Activated T-helper 1 cell treated with anti-CD3 and anti-CD28 coated beads, Interleukin-12 subunit alpha, Interleukin-12 subunit beta, Interleukin-2, Interleukin-4 antibody, amounts not matched to agents 30 ng/mL and 10 ng/mL and 1 ng/mL, durations not matched to agents 14 hours and 24 hours and 36 hours (primary cell): ENCODE measurements at regions of chr10 and their contacts with region 1.

Region 1: GRCh38 chr10:97498076-97498840 is at the start of gene MMS19:
- DNase-seq: peak; percentile 99
- H3K4me3 Mint-ChIP-seq: peak within 1 kb of the TSS; percentile 99
- H3K27ac Mint-ChIP-seq: peak within 1 kb of the TSS; percentile 99
- H3K4me1 Mint-ChIP-seq: peaks cover 47% of the 10 kb centered on the region
- H3K27me3 Mint-ChIP-seq: peaks cover 34% of the 10 kb centered on the region
- total RNA-seq, gene MMS19: 91.8 and 93.2 TPM in 2 replicates

Region 2: DNA sequence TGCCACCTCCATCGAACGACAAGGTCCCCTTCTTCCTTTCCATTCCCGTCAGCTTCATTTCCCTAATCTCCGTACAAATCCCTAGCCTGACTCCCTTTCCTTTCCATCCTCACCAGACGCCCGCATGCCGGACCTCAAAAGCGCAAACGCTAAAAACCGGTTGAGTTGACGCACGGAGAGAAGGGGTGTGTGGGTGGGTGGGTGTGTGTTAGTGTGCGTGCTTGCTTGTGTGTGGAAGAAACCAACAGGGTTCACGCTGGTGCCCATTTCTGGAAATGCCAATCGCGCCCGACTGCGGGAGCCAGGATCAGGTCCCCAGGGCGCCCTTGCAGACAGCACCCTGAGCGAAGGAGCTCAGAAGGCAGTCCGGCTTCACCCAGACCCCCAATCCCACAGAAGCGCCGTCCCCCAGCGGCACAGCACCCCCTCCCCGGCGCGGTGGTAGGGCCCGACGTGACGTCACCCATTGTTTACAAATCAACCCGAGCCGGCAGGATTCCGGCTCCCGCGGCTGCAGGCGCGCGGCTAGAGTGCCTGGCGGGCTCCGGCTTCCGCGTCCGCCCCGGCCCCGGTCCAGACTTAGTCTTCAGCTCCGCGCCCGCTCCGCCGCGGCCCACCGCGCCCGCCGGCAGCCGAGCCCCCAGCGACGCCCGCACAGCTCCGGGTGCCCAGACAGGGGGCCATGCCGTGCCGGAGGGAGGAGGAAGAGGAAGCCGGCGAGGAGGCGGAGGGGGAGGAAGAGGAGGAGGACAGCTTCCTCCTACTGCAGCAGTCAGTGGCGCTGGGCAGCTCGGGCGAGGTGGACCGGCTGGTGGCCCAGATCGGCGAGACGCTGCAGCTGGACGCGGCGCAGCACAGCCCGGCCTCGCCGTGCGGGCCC is 179.2 kb before region 1 on chr10 and contains the start of gene FRAT1:
- intact Hi-C with region 1: loop called (anchors 2 kb)
- DNase-seq: peak; percentile 86
- H3K4me3 Mint-ChIP-seq: peak within 1 kb of the TSS; percentile 87
- H3K27ac Mint-ChIP-seq: peak within 1 kb of the TSS; percentile 97
- H3K4me1 Mint-ChIP-seq: peaks cover 26% of the 10 kb centered on the region
- H3K27me3 Mint-ChIP-seq: peaks cover 24% of the 10 kb centered on the region
- total RNA-seq, gene FRAT1: 3.0 and 3.3 TPM in 2 replicates

Region 3: DNA sequence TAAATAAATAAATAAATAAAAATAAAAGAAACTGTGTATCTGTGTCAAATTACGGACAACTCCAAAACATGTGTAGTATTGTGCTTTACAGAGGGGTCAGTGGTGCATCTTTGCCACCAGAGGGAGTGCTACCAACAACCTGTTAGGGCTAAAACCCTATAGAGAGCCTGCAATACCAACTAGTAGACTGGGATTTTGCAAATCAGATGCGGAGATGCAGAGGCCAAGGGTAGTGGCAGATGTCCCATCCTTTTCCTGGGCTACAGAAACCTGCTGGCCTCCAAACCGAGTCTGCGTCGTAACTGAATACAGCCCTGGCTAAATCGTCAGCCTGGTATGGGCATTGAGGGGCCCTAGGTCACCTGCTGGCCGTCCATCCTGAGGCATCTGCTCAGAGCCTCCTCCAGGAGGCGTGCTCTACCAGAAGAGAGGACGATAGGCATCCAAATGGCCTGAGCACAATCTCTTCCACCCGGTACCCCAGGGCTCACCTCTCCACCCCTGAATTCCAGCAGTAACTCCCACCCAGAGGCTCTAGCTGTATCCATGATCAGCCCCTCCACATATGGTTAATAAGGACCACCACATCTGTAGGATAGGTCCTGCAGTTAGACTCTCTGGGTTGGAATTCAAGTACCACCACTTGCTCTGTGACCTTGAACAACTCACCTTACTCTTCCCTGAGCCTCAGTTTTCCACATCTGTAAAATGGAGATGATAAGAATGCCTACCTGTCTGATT is 90.9 kb before region 1 on chr10:
- intact Hi-C with region 1: loop called (anchors 1 kb)
- DNase-seq: peak; percentile 55
- H3K4me3 Mint-ChIP-seq: peak overlapping the region; percentile 57
- H3K27ac Mint-ChIP-seq: peak overlapping the region; percentile 46
- H3K4me1 Mint-ChIP-seq: peaks cover 11% of the 10 kb centered on the region
- H3K27me3 Mint-ChIP-seq: no peaks in the 10 kb centered on the region

Region 4: GRCh38 chr10:97542169-97543024 is 44.1 kb after region 1 on chr10:
- intact Hi-C with region 1: loop called (anchors 1 kb)
- DNase-seq: no peak
- H3K4me3 Mint-ChIP-seq: no peak overlapping the region
- H3K27ac Mint-ChIP-seq: peak overlapping the region; percentile 85
- H3K4me1 Mint-ChIP-seq: peaks cover 29% of the 10 kb centered on the region
- H3K27me3 Mint-ChIP-seq: peaks cover 2% of the 10 kb centered on the region

Region 5: DNA sequence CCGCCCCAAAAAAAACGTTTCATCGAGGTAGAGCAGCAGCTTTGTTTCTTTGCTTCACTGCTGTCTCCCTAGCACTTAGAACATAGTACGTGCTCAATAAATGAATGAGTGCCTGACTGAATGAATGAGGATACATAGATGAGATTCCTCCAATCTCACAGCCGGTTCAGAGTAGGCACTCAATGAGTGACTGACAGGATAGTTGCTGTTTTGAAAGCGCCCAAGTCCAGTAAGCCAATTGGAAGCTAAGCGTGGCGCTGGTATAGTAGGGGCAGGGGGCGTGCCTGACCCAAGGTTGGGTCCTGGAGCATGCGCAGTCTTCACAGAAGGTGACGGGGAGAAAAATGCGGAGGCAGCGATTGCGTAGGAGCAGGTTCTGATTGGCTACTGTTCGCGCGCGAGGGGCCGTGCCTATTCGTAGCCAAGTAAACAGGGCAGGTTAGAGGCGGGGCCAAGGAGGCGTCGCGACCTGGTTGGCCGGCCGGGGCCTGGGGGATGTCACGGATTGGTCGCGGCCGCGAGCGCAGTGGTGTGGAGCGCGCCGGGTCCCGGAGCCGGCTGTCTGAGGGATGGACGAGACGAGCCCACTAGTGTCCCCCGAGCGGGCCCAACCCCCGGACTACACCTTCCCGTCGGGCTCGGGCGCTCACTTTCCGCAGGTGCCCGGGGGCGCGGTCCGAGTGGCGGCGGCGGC is 142.1 kb after region 1 on chr10 and contains the start of gene PI4K2A:
- intact Hi-C with region 1: loop called (anchors 1 kb)
- DNase-seq: peak; percentile 99
- H3K4me3 Mint-ChIP-seq: peak within 1 kb of the TSS; percentile 96
- H3K27ac Mint-ChIP-seq: peak within 1 kb of the TSS; percentile 86
- H3K4me1 Mint-ChIP-seq: peaks cover 23% of the 10 kb centered on the region
- H3K27me3 Mint-ChIP-seq: peaks cover 1% of the 10 kb centered on the region
- total RNA-seq, gene PI4K2A: 19.3 and 19.7 TPM in 2 replicates

Region 6: DNA sequence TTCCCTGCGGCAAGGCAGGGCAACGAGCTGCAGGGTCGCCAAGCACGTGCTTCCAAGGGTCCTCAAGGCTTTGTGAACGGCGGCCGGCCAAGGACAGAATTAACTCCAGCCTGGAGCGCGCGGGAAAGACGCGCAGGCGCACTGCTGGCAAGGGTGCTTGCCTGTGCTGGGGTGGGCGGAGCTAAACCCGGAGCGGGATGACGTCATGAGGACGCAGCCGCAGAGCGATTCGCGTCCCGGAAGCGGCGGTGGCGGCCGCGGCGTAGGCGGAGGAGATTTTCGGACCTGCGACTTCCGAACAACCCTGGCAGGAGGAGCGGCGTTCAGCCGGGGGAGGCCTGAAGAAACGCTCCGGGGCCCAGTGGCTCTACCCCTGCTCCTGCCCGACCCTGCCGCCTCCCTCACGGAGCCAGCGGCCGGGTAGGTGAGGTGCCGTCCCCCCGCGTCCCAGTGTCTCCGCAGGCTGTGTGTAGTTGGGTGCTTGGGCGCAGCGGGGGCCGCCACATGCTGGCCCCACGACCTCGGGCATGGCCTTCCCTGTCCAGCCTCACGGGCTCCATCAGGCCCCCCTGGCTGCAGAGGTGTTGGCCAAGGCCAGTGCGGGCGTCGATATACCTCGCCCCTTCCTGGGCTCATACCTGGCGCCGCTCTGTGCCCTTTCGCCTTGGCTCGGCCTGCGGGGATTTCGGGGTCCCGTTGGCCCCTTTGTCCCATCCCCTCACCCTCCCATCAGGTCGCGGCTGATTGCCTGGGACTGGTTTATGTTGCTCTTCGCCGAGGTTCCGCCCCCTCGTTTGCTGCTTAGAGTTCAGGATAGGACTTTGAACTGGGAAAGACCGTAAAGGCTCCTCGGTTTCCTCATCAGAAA is 238.9 kb after region 1 on chr10 and contains the start of gene ZFYVE27:
- intact Hi-C with region 1: loop called (anchors 1 kb)
- DNase-seq: peak; percentile 95
- H3K4me3 Mint-ChIP-seq: peak within 1 kb of the TSS; percentile 93
- H3K27ac Mint-ChIP-seq: peak within 1 kb of the TSS; percentile 100
- H3K4me1 Mint-ChIP-seq: peaks cover 44% of the 10 kb centered on the region
- H3K27me3 Mint-ChIP-seq: peaks cover 2% of the 10 kb centered on the region
- total RNA-seq, gene ZFYVE27: 41.7 and 42.5 TPM in 2 replicates